AG04449 (cell line): ENCODE measurements at regions of chr19 and their contacts with region 1.

Region 1: DNA sequence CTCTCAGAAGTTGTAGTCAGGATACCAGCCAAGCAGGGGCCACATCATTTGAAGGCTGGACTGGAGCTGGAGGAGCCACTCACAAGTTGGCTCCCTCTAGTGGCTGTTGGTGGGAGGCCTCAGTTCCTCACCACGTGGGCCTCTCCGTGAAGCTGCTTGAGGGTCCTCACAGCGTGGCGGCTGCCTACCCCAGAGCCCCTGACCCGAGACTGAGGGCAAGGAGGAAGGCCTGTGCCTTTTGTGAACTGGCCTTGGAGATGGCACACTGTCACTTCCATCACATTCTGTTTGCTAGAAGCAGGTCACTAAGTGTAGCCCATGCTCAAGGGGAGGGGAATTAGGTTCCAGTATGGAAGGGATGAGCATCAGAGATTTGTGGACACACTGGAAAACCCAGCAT is 14.6 kb downstream of the GNA11 start:
- DNase-seq: no peak
- H3K4me3 ChIP-seq: no peak overlapping the region
- CTCF ChIP-seq: peak; percentile 87

Region 2: DNA sequence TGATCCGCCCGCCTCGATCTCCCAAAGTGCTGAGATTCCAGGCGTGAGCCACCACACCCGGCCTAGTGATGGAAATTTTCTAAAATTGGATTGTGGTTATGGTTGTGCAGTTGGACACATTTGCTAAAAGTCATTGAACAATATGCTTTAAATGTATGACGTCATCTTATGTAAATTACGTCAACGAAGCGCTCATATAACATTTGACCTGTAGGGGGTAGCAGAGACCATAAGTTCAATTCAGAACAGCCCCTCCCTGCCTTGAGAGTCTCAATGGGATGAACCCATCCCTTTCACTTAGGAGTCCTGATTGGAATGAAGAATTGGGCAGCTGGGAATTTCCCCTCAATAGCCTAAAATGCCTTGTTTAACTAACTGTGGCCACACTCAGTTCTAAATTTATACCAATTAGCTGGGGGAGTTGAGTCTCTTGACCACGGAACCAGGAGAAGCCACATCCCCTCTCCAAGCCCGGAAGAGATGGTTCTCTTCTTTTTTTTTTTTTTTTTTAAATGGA is 146.7 kb before region 1 on chr19:
- CTCF ChIA-PET with region 1: interaction called, 48 read pairs
- POLR2A ChIA-PET with region 1: no interaction called
- DNase-seq: no peak
- H3K4me3 ChIP-seq: peak overlapping the region; percentile 12; the same call in 1 of the 2 replicates
- CTCF ChIP-seq: peak; percentile 43

Region 3: DNA sequence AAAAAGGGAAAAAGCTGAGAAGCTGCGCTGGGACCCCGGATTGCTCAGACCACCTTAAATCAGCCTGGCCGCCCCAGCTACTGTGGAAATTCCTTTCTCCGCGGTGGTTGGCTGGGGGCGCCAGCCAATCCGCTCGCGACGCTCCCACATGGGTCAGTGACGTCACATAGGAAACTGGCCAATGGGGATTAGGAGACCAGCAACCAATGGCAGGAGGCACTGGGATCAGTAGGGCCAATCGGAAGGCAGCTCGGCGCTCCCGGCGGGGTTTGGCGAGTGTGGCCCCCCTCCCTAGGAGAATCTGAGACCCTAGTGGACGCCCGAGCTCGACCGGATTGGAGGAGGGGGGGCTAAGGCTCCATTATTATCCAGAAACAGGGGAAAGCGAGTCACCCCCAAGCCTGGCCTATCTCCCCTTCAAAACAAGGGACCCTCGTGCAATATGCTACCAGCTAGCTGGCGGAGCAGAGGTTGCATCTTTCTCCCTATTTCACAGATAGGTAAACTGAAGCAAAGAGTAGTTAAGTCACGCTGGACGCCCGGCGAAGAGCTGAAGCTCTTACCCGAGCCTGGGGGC is 73.1 kb before region 1 on chr19:
- CTCF ChIA-PET with region 1: interaction called, 10 read pairs
- POLR2A ChIA-PET with region 1: no interaction called
- DNase-seq: peak; percentile 86
- H3K4me3 ChIP-seq: peak overlapping the region; percentile 61
- CTCF ChIP-seq: no peak

Region 4: GRCh38 chr19:3098515-3099331 is 10.1 kb before region 1 on chr19:
- CTCF ChIA-PET with region 1: interaction called, 29 read pairs
- POLR2A ChIA-PET with region 1: no interaction called
- DNase-seq: no peak
- H3K4me3 ChIP-seq: peak overlapping the region; percentile 15; the same call in 1 of the 2 replicates
- CTCF ChIP-seq: no peak

Region 5: DNA sequence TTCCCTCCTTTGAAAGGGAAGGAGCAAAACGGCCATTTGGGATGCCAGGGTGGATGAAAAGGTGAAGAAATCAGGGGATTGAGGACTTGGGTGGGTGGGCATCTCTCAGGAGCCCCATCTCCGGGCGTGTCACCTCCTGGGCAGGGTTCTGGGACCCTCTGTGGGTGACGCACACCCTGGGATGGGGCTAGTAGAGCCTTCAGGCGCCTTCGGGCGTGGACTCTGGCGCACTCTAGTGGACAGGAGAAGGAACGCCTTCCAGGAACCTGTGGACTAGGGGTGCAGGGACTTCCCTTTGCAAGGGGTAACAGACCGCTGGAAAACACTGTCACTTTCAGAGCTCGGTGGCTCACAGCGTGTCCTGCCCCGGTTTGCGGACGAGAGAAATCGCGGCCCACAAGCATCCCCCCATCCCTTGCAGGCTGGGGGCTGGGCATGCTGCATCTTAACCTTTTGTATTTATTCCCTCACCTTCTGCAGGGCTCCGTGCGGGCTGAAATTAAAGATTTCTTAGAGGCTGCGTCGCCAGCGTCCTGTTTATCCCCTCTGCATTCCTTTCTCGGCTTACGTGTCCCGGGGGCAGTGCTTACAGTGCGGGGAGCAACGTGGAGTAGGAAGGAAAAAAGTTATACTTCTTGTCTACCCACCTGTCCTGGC is 54.6 kb after region 1 on chr19:
- CTCF ChIA-PET with region 1: interaction called, 10 read pairs
- POLR2A ChIA-PET with region 1: no interaction called
- DNase-seq: no peak
- H3K4me3 ChIP-seq: no peak overlapping the region
- CTCF ChIP-seq: peak; percentile 90